ENCODE measurements at regions of chr2 and their contacts with region 1.

Region 1: DNA sequence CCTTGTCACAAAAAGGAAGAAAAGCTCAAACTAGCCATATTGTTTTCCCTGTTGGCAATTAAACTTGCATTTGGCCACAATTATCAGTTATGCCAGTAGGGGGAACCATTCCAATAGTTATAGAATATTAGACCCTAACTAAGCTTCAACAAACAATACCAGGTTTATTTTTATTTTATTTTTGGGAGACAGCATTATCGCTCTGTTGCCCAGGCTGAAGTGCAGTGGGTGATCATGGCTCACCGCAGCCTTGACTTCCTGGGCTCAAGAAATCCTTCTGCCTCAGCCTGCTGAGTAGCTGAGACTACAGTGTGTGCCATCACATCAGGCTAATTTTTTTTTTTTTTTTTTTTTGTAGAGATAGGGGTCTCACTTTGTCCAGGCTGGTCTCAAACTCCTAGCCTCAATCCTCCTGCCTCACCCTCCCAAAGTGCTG is 102.1 kb downstream of the ATAD2B start:
- DNase-seq: peak in 1 of 2 donors; percentile 73
- H3K4me3 ChIP-seq: no peak overlapping the region
- H3K27ac ChIP-seq: no peak overlapping the region
- H3K4me1 ChIP-seq: peaks cover 0 to 5% (median 0%) of the 10 kb centered on the region in 4 donors
- H3K27me3 ChIP-seq: no peaks in the 10 kb centered on the region
- CTCF ChIP-seq: peak in 5 of 7 experiments; percentile 26 to 67 (median 47)
- EP300 ChIP-seq: no peak
- POLR2A ChIP-seq: no peak

Region 2: DNA sequence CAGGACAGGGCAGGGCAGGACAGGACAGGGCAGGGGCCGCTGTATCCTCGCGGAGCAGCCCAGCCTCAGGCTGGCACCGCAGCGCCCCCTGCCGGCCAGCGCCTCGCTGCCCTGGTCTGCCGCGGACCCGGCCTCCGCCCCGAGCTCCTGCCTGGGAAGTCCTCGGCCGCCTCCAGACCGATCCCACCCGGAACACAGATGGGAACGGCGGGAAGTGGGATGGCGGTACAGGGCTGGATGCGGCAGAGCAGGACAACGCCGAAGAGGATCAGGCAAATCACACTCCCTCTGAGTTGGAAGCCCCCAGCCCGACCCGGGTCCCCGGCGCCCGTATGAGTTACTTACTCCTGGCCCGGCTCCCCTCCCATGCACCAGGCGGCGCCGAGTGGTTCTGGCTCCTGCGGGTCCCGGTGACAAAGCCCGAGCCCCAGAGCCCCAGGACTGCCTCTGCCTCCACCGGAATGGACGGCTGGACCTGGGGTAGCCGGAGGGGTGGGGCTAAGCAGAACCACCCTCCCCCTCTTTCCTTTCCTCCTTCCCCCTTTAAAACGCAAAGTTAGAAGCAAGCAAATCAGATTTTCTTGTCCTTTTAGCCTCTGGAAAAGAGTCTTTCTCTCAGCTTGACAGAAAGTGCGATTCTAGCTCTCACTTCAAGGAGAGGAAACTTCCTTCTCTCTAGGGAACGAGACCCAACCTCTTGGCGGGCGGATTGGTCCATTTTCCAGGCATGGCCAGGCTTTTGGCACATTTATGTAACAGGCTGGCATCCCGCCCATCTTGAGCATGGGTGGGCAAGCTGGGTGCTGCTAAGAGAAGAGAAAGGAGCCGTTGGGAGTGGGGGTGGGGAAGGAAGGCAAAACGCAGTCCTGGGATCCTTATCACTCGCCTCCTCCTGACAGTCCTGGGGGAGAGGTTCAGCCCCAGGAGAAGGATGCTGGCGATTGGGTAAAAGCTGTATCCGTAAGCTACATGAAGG is 259.9 kb after region 1 on chr2 and contains the start of gene TP53I3:
- intact Hi-C with region 1: loop called (anchors 10 kb)
- DNase-seq: peak; percentile 92 to 98
- H3K4me3 ChIP-seq: peak within 1 kb of the TSS; percentile 54 to 61 (median 56)
- H3K27ac ChIP-seq: peak within 1 kb of the TSS; percentile 88 to 94 (median 91)
- H3K4me1 ChIP-seq: peaks cover 8 to 30% (median 25%) of the 10 kb centered on the region in 4 donors
- H3K27me3 ChIP-seq: no peaks in the 10 kb centered on the region
- CTCF ChIP-seq: peak in 6 of 7 experiments; percentile 68 to 99 (median 97)
- EP300 ChIP-seq: no peak
- POLR2A ChIP-seq: peak in 1 of 4 donors; percentile 19
- total RNA-seq, gene TP53I3: 9.3 to 103 (median 38.7) TPM

Measured in stomach (tissue), 19 donors.